Sciatic nerve (tissue), 2 donors: ENCODE measurements at regions of chr9 and their contacts with region 1.

Region 1: GRCh38 chr9:78074385-78075291 is 43.0 kb upstream of the GNAQ start:
- DNase-seq: no peak
- ATAC-seq: no peak

Region 2: GRCh38 chr9:77215874-77216273 is 858.8 kb before region 1 on chr9:
- intact Hi-C with region 1: no loop called
- DNase-seq: no peak
- ATAC-seq: no peak

Region 3: GRCh38 chr9:77841739-77842386 is 232.8 kb before region 1 on chr9:
- intact Hi-C with region 1: no loop called
- DNase-seq: no peak
- ATAC-seq: no peak

Region 4: GRCh38 chr9:78158286-78158685 is 83.6 kb after region 1 on chr9:
- intact Hi-C with region 1: no loop called
- DNase-seq: no peak
- ATAC-seq: no peak

Region 5: DNA sequence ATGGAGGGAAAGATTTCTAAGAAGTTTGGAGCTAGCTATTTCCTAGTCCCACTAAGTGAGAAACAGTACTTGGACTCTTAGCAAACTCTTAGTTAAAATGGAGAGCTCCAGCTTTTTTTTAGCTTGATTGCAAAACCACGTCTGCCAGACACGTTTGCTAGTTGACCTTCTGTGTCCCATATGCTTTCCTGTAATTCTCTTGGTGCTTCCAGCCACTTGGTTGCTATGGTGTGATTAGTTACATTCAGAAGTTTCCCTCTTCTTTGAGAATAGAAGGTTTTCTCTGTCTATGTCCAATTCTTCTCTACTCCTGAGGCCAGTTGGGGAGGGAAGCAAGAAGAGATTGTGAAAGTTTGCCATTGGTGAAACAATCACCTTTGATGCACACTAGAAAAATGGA is 1080.2 kb after region 1 on chr9:
- intact Hi-C with region 1: loop called (anchors 5 kb)
- DNase-seq: no peak
- ATAC-seq: no peak